ENCODE measurements at regions of chr14 and their contacts with region 1.

Region 1: DNA sequence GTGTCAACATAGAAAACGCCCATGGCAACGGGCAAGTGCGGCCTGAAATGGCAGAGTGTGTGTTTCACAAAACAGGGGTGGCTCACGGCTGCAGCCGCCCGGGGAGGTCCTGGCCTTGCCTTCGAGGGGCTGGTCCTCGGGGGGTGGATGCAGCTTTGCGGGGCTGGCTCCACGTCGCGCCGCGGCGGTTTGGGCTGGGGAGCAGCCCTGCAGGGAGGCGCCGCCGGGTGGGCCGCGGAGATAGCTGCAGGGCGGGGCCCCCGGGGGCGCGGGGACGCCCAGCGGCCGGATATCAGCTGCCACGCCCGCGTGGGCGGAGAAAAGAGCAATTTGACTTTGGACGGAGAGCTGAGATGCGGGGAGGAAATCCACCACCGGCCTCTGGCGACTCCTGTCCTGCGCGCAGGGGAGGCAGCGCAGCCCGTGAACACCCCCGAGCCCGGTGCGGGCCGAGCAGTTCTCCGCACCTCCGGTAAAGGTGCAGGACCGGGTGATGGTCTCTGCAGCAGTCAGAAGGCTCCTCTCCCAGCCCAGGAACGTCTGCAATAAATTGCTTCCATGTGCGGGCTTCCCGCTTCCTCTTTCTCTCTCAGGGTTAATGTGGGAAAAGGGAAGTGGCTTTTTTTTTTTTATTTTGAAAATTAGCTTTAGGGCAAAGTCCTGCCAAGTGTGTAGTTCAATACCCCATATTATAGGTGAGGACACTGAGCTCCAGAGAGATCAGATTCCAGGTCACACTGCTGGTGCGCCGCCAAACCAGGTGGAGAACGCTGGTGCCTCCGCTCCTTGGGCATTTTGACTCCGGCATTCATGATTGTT is 110.5 kb downstream of the ARF6 start:
- DNase-seq: peak; percentile 72
- H3K4me3 Mint-ChIP-seq: peak overlapping the region; percentile 73
- H3K27ac Mint-ChIP-seq: peak overlapping the region; percentile 95
- H3K4me1 Mint-ChIP-seq: peaks cover 45% of the 10 kb centered on the region
- H3K27me3 Mint-ChIP-seq: no peaks in the 10 kb centered on the region
- CTCF ChIP-seq: no peak

Region 2: DNA sequence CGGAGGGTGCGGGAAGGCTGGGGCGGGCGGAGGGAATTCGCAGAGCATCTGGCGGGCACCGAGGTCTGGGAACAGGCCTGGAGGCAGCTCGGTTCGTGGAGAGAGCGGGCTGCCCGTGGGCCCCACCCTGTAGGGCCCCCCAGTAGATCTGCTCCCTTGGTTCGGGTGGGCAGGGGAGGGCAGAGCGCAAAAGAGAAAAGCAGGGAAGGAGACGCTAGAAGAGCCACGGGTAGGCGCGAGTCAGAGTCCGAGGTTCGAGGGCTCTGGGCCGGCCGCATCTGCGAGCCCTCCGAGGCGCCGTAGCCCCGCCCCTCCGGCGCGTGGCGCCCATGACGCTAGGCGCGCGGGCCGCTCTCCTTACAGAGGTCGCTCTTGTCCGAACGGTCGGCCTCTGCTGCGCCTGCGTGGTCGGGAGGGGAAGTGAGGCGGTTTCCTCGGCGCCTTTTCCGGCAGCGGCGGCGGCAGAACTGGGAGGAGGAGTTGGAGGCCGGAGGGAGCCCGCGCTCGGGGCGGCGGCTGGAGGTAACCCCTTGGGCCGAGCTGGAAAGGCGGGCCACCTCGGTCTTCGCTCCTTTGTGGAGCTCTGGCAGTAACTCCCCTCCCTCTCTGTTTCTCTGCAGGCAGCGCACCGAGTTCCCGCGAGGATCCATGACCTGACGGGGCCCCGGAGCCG is 110.7 kb before region 1 on chr14 and contains the start of gene ARF6:
- CTCF ChIA-PET with region 1: interaction called, 14 read pairs
- POLR2A ChIA-PET with region 1: interaction called, 94 read pairs
- intact Hi-C with region 1: loop called (anchors 1 kb)
- DNase-seq: peak; percentile 97
- H3K4me3 Mint-ChIP-seq: peak within 1 kb of the TSS; percentile 92
- H3K27ac Mint-ChIP-seq: peak within 1 kb of the TSS; percentile 99
- H3K4me1 Mint-ChIP-seq: peaks cover 28% of the 10 kb centered on the region
- H3K27me3 Mint-ChIP-seq: no peaks in the 10 kb centered on the region
- CTCF ChIP-seq: no peak
- total RNA-seq, gene ARF6: 111 and 112 TPM in 2 replicates

Region 3: DNA sequence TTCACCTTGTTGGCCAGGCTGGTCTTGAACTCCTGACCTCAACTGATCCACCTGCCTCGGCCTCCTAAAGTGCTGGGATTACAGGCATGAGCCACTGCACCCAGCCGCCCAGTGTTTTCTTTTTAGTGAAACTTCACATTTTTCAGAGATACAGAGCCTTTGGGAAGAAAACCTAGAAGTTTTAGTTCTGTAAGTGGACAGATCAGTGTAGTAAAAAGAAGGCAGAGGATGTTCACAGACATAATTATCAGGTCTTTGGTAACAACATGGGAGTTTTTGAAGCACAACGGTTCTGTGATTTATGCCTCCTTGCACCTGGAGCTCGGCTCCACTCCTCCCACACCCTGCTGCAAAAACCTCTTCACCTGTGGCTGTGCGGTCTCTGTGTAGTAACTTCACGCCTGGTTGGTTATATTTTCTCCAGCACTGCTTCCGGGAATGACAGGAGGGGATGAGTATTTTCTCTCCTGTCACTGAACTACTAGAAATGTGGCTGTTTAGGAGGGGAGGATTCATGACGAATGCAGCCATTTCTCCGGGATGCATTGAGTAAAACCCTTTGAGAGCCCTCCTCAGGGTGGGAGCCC is 43.5 kb before region 1 on chr14:
- CTCF ChIA-PET with region 1: interaction called, 7 read pairs
- POLR2A ChIA-PET with region 1: interaction called, 222 read pairs
- intact Hi-C with region 1: loop called (anchors 5 kb)
- DNase-seq: no peak
- H3K4me3 Mint-ChIP-seq: no peak overlapping the region
- H3K27ac Mint-ChIP-seq: no peak overlapping the region
- H3K4me1 Mint-ChIP-seq: peaks cover 31% of the 10 kb centered on the region
- H3K27me3 Mint-ChIP-seq: no peaks in the 10 kb centered on the region
- CTCF ChIP-seq: no peak

Region 4: DNA sequence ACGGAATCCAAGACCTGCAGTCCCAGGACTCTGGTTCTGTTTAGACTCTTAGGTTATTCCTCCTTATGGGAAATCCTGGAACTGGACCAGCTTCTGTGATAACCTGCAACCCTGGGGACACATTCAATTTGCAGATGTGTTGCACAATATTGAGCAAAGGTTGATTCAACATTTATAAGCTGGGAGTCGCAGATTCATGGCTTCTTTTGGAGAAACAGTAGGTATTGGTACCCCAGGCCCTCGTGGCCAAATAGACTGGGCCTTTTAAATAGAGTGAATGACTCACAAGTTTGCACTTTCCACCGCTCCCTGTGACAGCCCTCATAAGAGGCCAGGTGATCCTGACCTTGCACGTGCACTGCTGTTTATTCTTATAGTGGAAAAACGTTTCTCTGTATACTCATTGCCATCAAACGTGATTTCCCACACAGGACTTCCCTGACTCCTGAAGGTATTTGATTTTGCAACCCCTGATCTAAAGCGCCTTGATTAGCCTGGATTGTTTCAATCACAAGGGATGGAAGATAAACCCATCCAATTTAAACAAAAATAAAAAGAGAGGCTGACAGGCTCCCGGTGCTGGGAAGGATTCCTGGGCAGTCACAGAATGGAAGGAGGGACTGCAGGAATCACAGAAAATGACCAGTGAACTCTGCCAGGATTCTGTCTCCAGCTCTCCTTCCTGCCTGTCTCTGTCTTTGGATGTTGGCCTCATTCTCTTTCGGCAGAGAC is 14.9 kb after region 1 on chr14:
- CTCF ChIA-PET with region 1: interaction called, 10 read pairs
- POLR2A ChIA-PET with region 1: interaction called, 44 read pairs
- intact Hi-C with region 1: no loop called
- DNase-seq: peak; percentile 47
- H3K4me3 Mint-ChIP-seq: no peak overlapping the region
- H3K27ac Mint-ChIP-seq: peak overlapping the region; percentile 51
- H3K4me1 Mint-ChIP-seq: peaks cover 12% of the 10 kb centered on the region
- H3K27me3 Mint-ChIP-seq: no peaks in the 10 kb centered on the region
- CTCF ChIP-seq: no peak

Region 5: DNA sequence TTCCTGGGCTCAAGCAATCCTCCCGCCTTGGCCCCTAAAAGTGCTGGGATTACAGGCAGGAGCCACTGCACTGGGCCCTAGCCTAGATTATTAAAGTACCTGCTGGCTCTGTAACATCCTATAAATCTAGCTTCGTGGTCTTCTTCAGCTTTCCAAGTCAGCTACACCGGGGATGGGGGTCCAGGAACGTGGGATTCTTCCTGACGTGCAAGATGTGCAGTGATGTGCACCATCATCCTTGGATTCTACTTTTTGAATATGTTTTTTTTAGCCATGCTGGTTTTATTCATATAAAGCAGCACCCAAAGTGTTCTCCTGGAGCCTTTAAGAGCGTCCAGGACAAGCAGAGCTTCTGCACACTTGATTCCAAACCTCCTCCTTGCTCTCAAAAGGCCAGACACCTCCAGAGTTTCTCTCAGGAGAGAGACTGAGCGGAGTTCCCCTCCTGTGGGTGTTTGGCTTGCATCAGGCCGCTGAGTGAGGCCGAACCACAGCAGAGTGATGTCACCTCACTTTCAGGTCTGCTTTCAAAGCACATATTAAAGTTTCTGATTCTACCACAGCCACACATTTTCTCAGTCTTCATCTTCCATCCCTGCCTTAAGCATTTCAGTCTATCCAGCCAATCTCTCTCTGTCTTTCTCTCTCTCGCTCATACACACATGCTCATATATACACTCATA is 79.5 kb after region 1 on chr14:
- CTCF ChIA-PET with region 1: no interaction called
- POLR2A ChIA-PET with region 1: interaction called, 16 read pairs
- intact Hi-C with region 1: no loop called
- DNase-seq: no peak
- H3K4me3 Mint-ChIP-seq: no peak overlapping the region
- H3K27ac Mint-ChIP-seq: no peak overlapping the region
- H3K4me1 Mint-ChIP-seq: peaks cover 26% of the 10 kb centered on the region
- H3K27me3 Mint-ChIP-seq: no peaks in the 10 kb centered on the region
- CTCF ChIP-seq: no peak

Measured in MCF 10A (cell line).